PC-3 (cell line): ENCODE measurements at regions of chr17 and their contacts with region 1.

Region 1: DNA sequence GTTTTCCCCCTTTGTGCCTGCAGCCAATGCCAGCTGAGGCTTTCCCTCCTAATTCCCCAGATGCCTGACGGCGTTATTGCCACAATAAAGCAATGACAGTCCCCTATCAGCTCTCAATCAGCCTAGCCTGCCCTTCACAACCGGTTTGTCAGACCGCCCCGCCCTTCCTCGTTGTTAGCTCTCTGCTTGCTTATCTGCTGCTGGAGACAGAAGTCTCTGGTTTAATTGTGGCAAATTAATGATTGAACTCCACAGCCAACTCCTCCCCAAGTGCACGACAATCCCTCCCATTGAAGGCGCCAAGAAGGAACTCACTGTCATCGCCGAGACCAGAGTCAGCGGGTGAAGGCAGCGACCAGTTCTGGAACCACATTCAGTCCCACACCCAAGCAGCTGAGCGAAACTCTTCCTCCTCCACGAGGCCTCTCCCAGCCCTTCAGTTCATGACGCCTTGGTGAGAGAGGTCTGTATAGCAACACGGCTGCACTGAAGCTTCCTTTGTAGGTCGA is 474.4 kb downstream of the SLC39A11 start:
- DNase-seq: peak; percentile 76
- ATAC-seq: peak; percentile 19
- H3K4me3 ChIP-seq: peak overlapping the region; percentile 27; the same call in 1 of the 2 replicates
- H3K27ac ChIP-seq: peak overlapping the region; percentile 51
- H3K4me1 ChIP-seq: peaks cover 44% of the 10 kb centered on the region
- H3K27me3 ChIP-seq: no peaks in the 10 kb centered on the region
- CTCF ChIP-seq: no peak

Region 2: DNA sequence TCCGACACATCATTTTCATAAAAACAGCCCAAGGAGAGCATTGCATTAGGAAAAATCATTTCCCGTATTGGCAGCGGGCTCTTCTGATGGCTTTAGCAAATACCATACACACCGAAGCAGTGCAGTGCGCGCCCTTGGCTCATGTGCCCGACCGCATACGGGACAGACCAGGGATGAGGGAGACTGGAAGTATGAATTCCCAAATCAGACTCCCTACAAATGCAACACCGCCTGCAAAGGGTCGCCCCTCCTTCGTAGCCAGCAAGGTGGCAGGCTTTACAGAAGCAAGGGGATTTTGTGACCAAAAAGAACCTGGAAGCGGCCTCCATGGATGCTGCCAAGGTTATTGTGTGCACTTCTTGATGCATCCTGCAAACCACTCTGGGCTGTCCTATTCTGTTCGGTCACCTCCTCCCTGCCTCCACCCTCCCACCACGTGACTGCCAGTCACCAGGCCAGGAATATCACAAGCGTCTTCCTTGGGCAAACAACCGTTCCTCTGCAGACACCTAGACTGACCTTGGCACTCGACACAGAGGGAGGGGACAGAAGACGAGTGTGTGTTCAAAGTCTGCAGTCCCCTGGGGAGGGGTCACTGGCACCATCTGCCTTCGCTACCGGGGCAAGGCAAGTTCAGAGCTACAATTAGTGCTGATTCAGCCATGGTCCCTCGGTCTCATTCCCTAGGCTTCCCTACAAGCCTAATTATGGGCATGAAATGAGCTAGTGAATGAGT is 14.1 kb after region 1 on chr17:
- CTCF ChIA-PET with region 1: no interaction called
- POLR2A ChIA-PET with region 1: interaction called, 3 read pairs
- intact Hi-C with region 1: loop called (anchors 2 kb)
- DNase-seq: peak; percentile 85
- ATAC-seq: peak; percentile 80
- H3K4me3 ChIP-seq: peak overlapping the region; percentile 44
- H3K27ac ChIP-seq: peak overlapping the region; percentile 91
- H3K4me1 ChIP-seq: peaks cover 31% of the 10 kb centered on the region
- H3K27me3 ChIP-seq: no peaks in the 10 kb centered on the region
- CTCF ChIP-seq: no peak